Mammary epithelial cell (primary cell): ENCODE measurements at regions of chr6 and their contacts with region 1.

Region 1: DNA sequence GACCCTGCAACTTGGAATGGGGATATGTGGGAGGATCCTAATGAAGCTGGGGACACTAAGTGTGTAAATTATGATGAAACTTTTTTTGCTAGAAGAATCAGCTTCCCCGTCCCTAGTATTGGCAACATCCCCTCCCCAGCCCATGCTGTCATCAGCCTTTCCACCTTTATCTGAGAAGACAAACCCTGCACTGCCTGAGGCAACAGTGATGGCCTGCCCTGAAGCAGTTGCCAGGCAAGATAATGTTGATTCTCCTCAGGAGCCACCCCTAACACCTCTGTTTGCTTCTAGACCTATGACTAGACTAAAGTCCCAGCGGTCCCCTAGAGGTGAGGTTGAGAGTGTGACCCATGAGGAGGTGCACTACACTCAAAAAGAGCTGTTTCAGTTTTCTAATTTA is 27.1 kb downstream of the MICA start:
- DNase-seq: no peak
- H3K4me3 ChIP-seq: no peak overlapping the region
- H3K27ac ChIP-seq: no peak overlapping the region
- H3K4me1 ChIP-seq: no peaks in the 10 kb centered on the region
- H3K27me3 ChIP-seq: no peaks in the 10 kb centered on the region
- CTCF ChIP-seq: no peak

Region 2: DNA sequence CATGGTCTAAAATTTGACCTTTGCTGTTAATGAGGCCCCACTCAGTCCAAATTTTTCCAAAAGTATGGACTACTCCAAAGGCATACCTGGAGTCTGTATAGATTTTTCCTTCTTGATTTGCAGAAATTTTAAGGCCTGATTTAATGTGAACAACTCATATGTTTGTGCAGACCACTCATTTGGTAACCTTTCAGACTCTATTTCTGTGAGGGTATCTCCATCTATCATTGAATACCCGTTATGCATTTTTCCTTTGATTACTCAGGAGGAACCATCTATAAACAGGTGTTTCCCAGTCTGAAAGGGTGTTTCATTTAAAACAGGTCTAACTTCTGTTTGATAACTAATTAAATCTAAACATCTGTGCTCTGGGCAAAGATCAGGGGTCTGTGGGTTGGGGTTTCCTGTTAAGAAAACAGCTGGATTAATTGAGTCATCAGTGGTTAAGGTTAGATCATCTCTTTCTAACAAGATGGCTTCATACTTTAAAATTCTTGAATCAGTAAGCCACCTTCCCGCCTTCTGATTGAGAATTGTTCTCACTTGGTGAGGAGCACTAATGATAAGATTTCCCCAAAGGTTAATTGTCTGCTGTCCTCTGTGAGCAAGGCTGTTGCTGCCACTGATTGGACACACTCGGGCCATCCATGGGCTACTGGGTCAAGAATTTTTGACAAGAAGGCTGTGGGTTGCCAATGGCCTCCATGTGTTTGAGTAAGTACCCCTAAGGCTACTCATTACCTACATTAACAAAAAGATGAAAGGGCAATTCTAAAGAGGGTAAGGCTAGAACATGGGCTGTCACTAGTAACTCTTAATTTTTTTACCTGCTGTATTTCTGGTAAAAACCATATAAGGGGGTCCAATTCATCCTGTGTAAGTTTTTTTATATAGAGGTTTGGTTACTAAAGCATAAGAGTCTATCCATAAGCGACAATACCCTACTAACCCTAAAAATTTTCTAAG is 97.5 kb before region 1 on chr6:
- CTCF ChIA-PET with region 1: no interaction called
- dilution Hi-C with region 1: loop called (anchors 5 kb)
- in situ Hi-C with region 1: no loop called
- intact Hi-C with region 1: no loop called
- DNase-seq: no peak
- H3K4me3 ChIP-seq: no peak overlapping the region
- H3K27ac ChIP-seq: no peak overlapping the region
- H3K4me1 ChIP-seq: no peaks in the 10 kb centered on the region
- H3K27me3 ChIP-seq: no peaks in the 10 kb centered on the region
- CTCF ChIP-seq: no peak

Region 3: DNA sequence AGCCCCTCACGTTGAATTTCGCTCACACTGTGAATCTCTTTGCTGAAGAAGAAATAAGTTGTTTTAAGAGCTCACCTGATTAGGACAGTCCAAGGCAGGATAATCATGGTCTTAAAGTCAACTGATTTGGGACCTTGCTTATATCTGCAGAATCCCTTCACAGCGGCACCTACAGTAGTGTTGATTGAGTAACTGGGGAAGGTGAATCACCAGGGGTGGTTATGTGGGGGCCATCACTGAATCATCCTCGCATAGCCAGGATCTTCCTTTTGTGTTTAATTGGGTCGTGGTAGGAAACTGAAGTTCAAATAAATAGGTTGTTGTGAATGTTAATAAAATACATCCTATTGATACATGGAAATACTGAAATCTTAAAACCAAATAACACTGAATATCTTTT is 47.3 kb before region 1 on chr6:
- CTCF ChIA-PET with region 1: no interaction called
- dilution Hi-C with region 1: loop called (anchors 5 kb)
- in situ Hi-C with region 1: no loop called
- intact Hi-C with region 1: no loop called
- DNase-seq: peak; percentile 64
- H3K4me3 ChIP-seq: no peak overlapping the region
- H3K27ac ChIP-seq: no peak overlapping the region
- H3K4me1 ChIP-seq: no peaks in the 10 kb centered on the region
- H3K27me3 ChIP-seq: peaks cover 2% of the 10 kb centered on the region
- CTCF ChIP-seq: no peak

Region 4: DNA sequence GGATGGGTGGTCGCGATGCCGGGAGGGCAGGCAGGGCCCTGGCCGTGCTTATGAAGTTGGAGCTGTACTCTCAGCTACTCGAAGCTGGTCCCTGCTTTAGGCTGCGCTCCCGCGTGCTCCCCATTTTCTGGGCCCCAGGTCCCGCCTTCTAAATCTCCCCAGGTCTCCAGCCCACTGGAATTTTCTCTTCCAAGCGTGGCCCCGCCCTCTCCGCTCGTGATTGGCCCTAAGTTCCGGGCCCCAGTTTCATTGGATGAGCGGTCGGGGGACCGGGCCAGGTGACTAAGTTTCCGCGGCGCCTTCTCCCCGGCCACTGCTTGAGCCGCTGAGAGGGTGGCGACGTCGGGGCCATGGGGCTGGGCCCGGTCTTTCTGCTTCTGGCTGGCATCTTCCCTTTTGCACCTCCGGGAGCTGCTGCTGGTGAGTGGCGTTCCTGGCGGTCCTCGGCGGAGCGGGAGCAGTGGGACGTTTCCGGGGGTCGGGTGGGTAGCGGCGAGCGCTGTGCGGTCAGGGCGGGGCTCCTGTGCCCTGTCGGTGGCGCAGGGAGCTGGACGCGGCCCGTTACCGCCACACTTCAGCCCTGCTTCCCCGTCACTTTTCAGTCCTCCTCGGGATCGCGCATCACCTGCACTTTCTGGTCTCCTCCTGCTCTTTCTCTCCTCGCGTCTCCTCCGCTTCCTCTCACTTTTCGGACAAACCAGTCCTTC is 27.0 kb before region 1 on chr6 and contains the start of gene MICA:
- CTCF ChIA-PET with region 1: interaction called, 11 read pairs
- dilution Hi-C with region 1: no loop called
- in situ Hi-C with region 1: no loop called
- intact Hi-C with region 1: no loop called
- DNase-seq: peak; percentile 95
- H3K4me3 ChIP-seq: peak within 1 kb of the TSS; percentile 87 to 90 (median 88)
- H3K27ac ChIP-seq: peak within 1 kb of the TSS; percentile 95
- H3K4me1 ChIP-seq: peaks cover 19% of the 10 kb centered on the region
- H3K27me3 ChIP-seq: no peaks in the 10 kb centered on the region
- CTCF ChIP-seq: no peak
- total RNA-seq, gene MICA: 32.3 to 51.2 TPM

Region 5: GRCh38 chr6:31479933-31480535 is 49.6 kb after region 1 on chr6:
- CTCF ChIA-PET with region 1: no interaction called
- dilution Hi-C with region 1: loop called (anchors 5 kb)
- in situ Hi-C with region 1: no loop called
- intact Hi-C with region 1: no loop called
- DNase-seq: no peak
- H3K4me3 ChIP-seq: no peak overlapping the region
- H3K27ac ChIP-seq: no peak overlapping the region
- H3K4me1 ChIP-seq: no peaks in the 10 kb centered on the region
- H3K27me3 ChIP-seq: no peaks in the 10 kb centered on the region
- CTCF ChIP-seq: no peak